Activated B cell treated with CpG ODN at 0.5 μM for 24 hours (primary cell): ENCODE measurements at regions of chr12 and their contacts with region 1.

Region 1: GRCh38 chr12:89927226-89927698 is 218.6 kb upstream of the ATP2B1 start:
- DNase-seq: no peak
- ATAC-seq: peak; percentile 90
- H3K4me3 Mint-ChIP-seq: peak overlapping the region; percentile 89
- H3K27ac Mint-ChIP-seq: peak overlapping the region; percentile 98
- H3K4me1 Mint-ChIP-seq: peaks cover 69% of the 10 kb centered on the region
- H3K27me3 Mint-ChIP-seq: no peaks in the 10 kb centered on the region
- CTCF ChIP-seq: no peak

Region 2: GRCh38 chr12:89603678-89604077 is 323.6 kb before region 1 on chr12:
- CTCF ChIA-PET with region 1: no interaction called
- POLR2A ChIA-PET with region 1: no interaction called
- intact Hi-C with region 1: no loop called
- DNase-seq: no peak
- ATAC-seq: no peak
- H3K4me3 Mint-ChIP-seq: no peak overlapping the region
- H3K27ac Mint-ChIP-seq: no peak overlapping the region
- H3K4me1 Mint-ChIP-seq: peaks cover 3% of the 10 kb centered on the region
- H3K27me3 Mint-ChIP-seq: no peaks in the 10 kb centered on the region
- CTCF ChIP-seq: no peak

Region 3: DNA sequence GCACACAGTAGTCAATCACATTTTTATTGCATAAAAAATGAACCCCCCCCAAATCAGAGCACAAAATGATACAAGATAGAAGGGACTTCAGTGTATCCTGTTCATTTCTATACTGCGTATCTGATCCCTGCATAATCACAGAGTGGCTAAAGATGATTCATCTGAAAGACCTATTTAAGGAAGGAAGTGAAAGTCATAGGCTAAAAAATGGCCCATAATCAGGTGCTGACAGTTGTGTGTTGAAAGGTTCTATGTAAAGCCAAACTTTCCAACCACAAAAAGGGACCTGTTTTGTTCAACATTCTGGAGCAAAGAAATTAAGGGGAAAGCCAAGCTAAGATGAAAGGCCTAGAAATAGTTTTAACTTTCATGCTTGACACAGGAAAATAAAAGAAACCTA is 70.8 kb before region 1 on chr12:
- CTCF ChIA-PET with region 1: no interaction called
- POLR2A ChIA-PET with region 1: interaction called, 27 read pairs
- intact Hi-C with region 1: loop called (anchors 1 kb)
- DNase-seq: no peak
- ATAC-seq: peak; percentile 86
- H3K4me3 Mint-ChIP-seq: peak overlapping the region; percentile 68
- H3K27ac Mint-ChIP-seq: peak overlapping the region; percentile 91
- H3K4me1 Mint-ChIP-seq: peaks cover 64% of the 10 kb centered on the region
- H3K27me3 Mint-ChIP-seq: no peaks in the 10 kb centered on the region
- CTCF ChIP-seq: no peak

Region 4: DNA sequence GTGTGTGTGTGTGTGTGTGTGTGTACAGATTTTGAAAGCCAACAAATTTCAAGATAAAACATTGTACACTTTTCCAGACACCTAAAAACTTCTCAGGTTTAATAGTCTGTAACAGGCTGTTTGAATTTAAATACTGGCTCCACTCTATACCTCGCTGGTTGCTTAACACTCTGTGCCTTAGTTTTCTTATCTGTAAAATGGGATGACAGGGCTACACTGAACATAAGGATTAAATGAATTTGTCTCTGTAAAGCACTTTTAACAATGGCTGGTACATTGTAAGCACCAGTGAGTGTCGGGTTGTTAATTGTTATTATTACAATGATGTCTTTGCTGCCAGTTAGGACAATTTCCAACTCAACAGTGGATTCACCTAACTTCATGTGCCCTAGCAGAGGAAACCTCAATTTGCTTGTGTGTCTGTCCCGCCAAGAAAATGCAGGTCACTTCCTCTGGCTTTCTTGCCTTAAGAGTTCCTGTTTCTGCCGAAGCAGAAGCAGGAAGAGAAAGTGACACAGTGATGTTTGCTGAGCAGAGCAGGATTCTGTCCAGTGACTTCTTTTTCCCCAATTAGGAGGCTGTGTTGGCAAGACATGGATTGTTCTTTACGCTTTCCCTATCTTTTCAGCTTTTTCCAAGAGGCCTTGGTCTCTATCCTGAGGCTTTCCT is 64.6 kb before region 1 on chr12:
- CTCF ChIA-PET with region 1: no interaction called
- POLR2A ChIA-PET with region 1: interaction called, 27 read pairs
- intact Hi-C with region 1: loop called (anchors 1 kb)
- DNase-seq: peak; percentile 30
- ATAC-seq: peak; percentile 76
- H3K4me3 Mint-ChIP-seq: peak overlapping the region; percentile 81
- H3K27ac Mint-ChIP-seq: peak overlapping the region; percentile 96
- H3K4me1 Mint-ChIP-seq: peaks cover 73% of the 10 kb centered on the region
- H3K27me3 Mint-ChIP-seq: no peaks in the 10 kb centered on the region
- CTCF ChIP-seq: no peak

Region 5: GRCh38 chr12:89960011-89960507 is 32.8 kb after region 1 on chr12:
- CTCF ChIA-PET with region 1: interaction called, 6 read pairs
- POLR2A ChIA-PET with region 1: interaction called, 14 read pairs
- intact Hi-C with region 1: loop called (anchors 1 kb)
- DNase-seq: no peak
- ATAC-seq: peak; percentile 92
- H3K4me3 Mint-ChIP-seq: peak overlapping the region; percentile 74
- H3K27ac Mint-ChIP-seq: peak overlapping the region; percentile 85
- H3K4me1 Mint-ChIP-seq: peaks cover 38% of the 10 kb centered on the region
- H3K27me3 Mint-ChIP-seq: no peaks in the 10 kb centered on the region
- CTCF ChIP-seq: no peak

Region 6: DNA sequence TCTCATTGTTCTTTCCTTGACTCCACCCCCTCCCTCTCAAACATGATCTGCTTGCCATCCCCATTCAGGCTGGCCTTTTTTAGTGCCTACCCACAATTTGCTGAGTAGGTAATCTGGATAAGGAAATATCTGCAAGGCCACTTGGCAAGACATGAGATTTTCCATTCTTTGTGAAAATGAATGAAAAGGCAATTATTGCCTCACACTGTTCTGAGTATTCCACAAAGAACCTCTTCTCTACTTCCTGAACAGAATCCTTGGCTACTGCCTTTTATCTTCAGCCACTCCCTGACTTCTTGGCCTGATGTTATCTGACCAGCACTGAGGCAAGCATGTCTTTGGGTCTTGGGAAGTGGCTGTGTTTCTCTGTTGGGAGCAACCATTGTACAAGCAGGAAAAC is 44.6 kb after region 1 on chr12:
- CTCF ChIA-PET with region 1: no interaction called
- POLR2A ChIA-PET with region 1: no interaction called
- intact Hi-C with region 1: no loop called
- DNase-seq: no peak
- ATAC-seq: no peak
- H3K4me3 Mint-ChIP-seq: no peak overlapping the region
- H3K27ac Mint-ChIP-seq: no peak overlapping the region
- H3K4me1 Mint-ChIP-seq: peaks cover 8% of the 10 kb centered on the region
- H3K27me3 Mint-ChIP-seq: no peaks in the 10 kb centered on the region
- CTCF ChIP-seq: no peak

Region 7: DNA sequence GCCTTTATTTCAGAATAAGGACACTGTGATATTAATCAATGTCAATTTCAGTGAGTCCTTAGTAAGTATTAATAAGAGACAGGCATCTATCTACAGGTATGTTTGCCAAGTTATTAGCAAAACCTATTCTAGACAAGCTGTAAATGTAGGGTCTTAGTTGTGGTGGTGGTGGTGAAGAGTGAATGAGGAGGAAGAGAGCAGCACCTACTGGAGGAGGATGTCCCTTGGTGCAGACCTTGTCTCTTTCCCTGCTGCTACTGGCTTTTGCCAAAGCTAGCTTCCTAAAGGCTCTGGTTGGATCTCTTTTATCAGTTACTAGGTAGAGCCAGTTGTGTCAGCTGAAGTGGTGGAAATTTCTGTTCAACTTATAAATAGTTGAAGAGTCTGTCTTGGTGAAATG is 86.1 kb after region 1 on chr12:
- CTCF ChIA-PET with region 1: interaction called, 5 read pairs
- POLR2A ChIA-PET with region 1: interaction called, 5 read pairs
- intact Hi-C with region 1: loop called (anchors 2 kb)
- DNase-seq: no peak
- ATAC-seq: peak; percentile 90
- H3K4me3 Mint-ChIP-seq: no peak overlapping the region
- H3K27ac Mint-ChIP-seq: no peak overlapping the region
- H3K4me1 Mint-ChIP-seq: peaks cover 16% of the 10 kb centered on the region
- H3K27me3 Mint-ChIP-seq: no peaks in the 10 kb centered on the region
- CTCF ChIP-seq: no peak